ENCODE measurements at regions of chr1 and their contacts with region 1.

Region 1: GRCh38 chr1:23657659-23658275 is 33.8 kb upstream of the RPL11 start:
- DNase-seq: peak; percentile 60
- ATAC-seq: peak; percentile 98
- H3K4me3 ChIP-seq: no peak overlapping the region
- H3K27ac ChIP-seq: no peak overlapping the region
- H3K4me1 ChIP-seq: peaks cover 0 to 12% of the 10 kb centered on the region in 2 experiments; a peak in 2 of 4 replicates
- H3K27me3 ChIP-seq: no peaks in the 10 kb centered on the region
- CTCF ChIP-seq: peak; percentile 57 to 100 (median 98); a peak in 5 of 6 replicates
- POLR2A ChIP-seq: no peak
- RAD21 ChIP-seq: peak; percentile 53

Region 2: GRCh38 chr1:23643736-23644554 is 13.8 kb before region 1 on chr1:
- CTCF ChIA-PET with region 1: interaction called, 12 read pairs
- POLR2A ChIA-PET with region 1: no interaction called
- RAD21 ChIA-PET with region 1: no interaction called
- intact Hi-C with region 1: no loop called
- DNase-seq: no peak
- ATAC-seq: no peak
- H3K4me3 ChIP-seq: no peak overlapping the region
- H3K27ac ChIP-seq: no peak overlapping the region
- H3K4me1 ChIP-seq: peaks cover 3 to 4% of the 10 kb centered on the region in 2 experiments; a peak in 2 of 4 replicates
- H3K27me3 ChIP-seq: no peaks in the 10 kb centered on the region
- CTCF ChIP-seq: no peak
- POLR2A ChIP-seq: no peak
- RAD21 ChIP-seq: no peak